A549 (cell line): ENCODE measurements at regions of chrX and their contacts with region 1.

Region 1: GRCh38 chrX:129593137-129593536 is 53.1 kb downstream of the OCRL start:
- DNase-seq: peak in 1 of 2 experiments; percentile 30
- ATAC-seq: no peak
- H3K4me3 ChIP-seq: no peak overlapping the region
- H3K27ac ChIP-seq: no peak overlapping the region
- H3K4me1 ChIP-seq: peaks cover 10% of the 10 kb centered on the region; the same call in 1 of the 3 replicates
- CTCF ChIP-seq: no peak
- EP300 ChIP-seq: no peak
- POLR2A ChIP-seq: no peak
- RAD21 ChIP-seq: no peak

Region 2: DNA sequence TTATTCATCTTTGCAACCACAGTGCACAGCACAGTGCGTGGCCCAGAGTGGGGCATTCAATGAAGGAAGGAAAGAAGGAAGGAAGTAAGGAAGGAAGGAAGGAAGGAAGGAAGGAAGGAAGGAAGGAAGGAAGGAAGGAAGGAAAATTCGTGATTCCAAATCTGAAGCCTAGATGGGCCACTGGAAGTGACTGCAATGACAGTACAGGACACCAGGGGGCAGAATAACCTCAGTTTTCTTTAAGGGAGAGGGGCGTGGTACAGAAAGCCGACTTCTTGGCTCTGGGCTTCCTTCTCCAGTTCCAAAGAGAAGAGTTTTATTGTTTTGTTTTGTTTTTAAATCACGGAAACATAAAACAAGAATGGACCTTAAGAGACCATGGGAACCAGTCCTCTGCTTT is 13.8 kb after region 1 on chrX:
- CTCF ChIA-PET with region 1: interaction called, 14 read pairs
- POLR2A ChIA-PET with region 1: no interaction called
- DNase-seq: peak; percentile 47 to 62
- ATAC-seq: peak; percentile 59 to 69; a peak in 4 of 6 replicates
- H3K4me3 ChIP-seq: no peak overlapping the region
- H3K27ac ChIP-seq: no peak overlapping the region
- H3K4me1 ChIP-seq: peaks cover 4% of the 10 kb centered on the region; the same call in 1 of the 3 replicates
- CTCF ChIP-seq: peak; percentile 72
- EP300 ChIP-seq: no peak
- POLR2A ChIP-seq: no peak
- RAD21 ChIP-seq: peak; percentile 83 to 87

Region 3: GRCh38 chrX:129637217-129638109 is 44.3 kb after region 1 on chrX:
- CTCF ChIA-PET with region 1: no interaction called
- POLR2A ChIA-PET with region 1: no interaction called
- DNase-seq: peak; percentile 60 to 72
- ATAC-seq: peak; percentile 71 to 91
- H3K4me3 ChIP-seq: no peak overlapping the region
- H3K27ac ChIP-seq: no peak overlapping the region
- H3K4me1 ChIP-seq: no peaks in the 10 kb centered on the region
- CTCF ChIP-seq: peak; percentile 74
- EP300 ChIP-seq: no peak
- POLR2A ChIP-seq: no peak
- RAD21 ChIP-seq: peak; percentile 76 to 83